Gastrocnemius medialis (tissue), 4 donors: ENCODE measurements at regions of chr3 and their contacts with region 1.

Region 1: DNA sequence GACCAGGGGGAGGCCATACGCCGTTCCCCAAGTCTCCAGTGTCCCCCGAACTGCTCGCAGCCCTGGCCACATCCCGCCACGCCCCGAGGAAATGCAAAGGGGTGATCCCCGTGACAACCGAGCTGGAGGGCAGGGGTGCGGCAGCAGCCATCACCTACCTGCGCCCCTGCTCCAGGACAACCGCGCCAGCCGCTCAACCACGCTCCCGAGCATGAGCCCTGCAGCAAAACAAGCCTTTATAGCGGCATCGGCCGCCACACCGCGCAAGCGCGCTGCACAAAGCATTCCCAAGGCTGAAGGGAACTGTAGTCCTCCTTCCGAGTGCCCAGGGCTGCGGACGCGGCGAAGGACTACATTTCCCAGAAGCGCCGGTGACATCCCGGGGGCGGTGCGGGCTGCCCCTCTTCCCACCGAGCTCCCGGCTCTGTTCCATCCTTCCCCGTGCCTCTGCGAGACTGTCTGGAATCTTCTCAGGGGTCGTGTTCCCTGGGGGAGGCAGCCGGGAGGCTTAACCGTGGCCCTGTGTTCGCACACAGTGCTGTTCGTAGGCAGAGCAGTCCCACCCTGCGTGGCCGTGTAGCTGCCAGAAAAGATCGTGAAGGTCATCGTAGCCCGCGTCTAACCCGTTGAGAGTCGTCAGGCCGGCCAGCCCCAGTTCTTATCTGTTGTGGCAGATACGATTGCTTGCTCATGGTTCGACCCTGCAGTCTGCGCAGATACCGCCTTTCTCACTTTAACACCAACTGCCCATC is at the start of gene ABCC5:
- DNase-seq: peak; percentile 92 to 93
- ATAC-seq: peak; percentile 87 to 88
- H3K4me3 ChIP-seq: peak within 1 kb of the TSS; percentile 98 to 100 (median 100)
- H3K27ac ChIP-seq: peak within 1 kb of the TSS; percentile 87 to 98 (median 92)
- H3K4me1 ChIP-seq: peaks cover 19 to 37% of the 10 kb centered on the region in 2 donors
- H3K27me3 ChIP-seq: no peaks in the 10 kb centered on the region
- CTCF ChIP-seq: peak in 3 of 5 experiments; percentile 42 to 56 (median 52)
- POLR2A ChIP-seq: peak; percentile 65 to 88
- total RNA-seq, gene ABCC5: 20.4 to 52.2 (median 39.5) TPM

Region 2: GRCh38 chr3:183895296-183895695 is 122.6 kb before region 1 on chr3:
- in situ Hi-C with region 1: loop called in 3 of 4 experiments (anchors 5 to 10 kb)
- intact Hi-C with region 1: loop called (anchors 1 kb)
- DNase-seq: no peak
- ATAC-seq: peak; percentile 81 to 83
- H3K4me3 ChIP-seq: no peak overlapping the region
- H3K27ac ChIP-seq: no peak overlapping the region
- H3K4me1 ChIP-seq: peaks cover 0 to 4% of the 10 kb centered on the region in 2 donors
- H3K27me3 ChIP-seq: no peaks in the 10 kb centered on the region
- CTCF ChIP-seq: peak; percentile 69 to 79 (median 76)
- POLR2A ChIP-seq: no peak

Region 3: GRCh38 chr3:183975981-183976662 is 41.7 kb before region 1 on chr3:
- in situ Hi-C with region 1: no loop called
- intact Hi-C with region 1: loop called (anchors 1 kb)
- DNase-seq: no peak
- ATAC-seq: no peak
- H3K4me3 ChIP-seq: no peak overlapping the region
- H3K27ac ChIP-seq: peak overlapping the region; percentile 88 to 94 (median 90)
- H3K4me1 ChIP-seq: peaks cover 44 to 52% of the 10 kb centered on the region in 2 donors
- H3K27me3 ChIP-seq: no peaks in the 10 kb centered on the region
- CTCF ChIP-seq: no peak
- POLR2A ChIP-seq: no peak

Region 4: DNA sequence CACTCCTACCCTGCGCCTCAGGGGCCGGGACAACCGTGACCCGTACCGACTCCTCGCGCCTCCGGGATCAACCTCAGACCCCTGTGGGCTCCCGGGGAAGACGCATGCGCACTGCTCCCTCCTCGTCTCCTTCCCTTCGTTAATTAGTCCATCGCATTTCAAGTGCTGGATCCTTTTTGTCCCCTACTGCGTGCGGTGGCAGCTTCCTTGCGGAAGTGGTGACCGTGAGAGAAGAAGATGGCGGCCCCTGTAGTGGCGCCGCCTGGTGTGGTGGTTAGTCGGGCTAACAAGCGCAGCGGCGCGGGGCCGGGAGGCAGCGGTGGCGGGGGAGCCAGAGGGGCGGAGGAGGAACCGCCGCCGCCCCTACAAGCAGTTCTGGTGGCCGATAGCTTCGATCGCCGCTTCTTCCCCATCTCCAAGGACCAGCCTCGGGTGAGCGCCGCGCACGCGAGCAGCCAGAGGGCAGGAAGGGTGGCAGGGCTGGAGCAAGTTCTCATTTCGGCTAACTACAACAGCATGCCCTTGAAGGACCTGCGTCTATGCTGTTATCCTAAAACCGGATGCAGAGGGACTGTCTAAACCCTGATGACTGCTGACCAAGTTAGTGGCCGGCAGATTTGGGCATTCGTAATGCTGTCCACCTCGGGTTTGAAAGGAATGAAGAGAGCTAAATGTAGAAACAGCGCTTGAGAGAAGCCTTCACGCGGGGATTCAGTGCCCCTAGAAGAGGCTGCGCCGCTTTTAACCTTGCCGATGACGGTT is 117.5 kb after region 1 on chr3 and contains the start of gene EIF2B5:
- in situ Hi-C with region 1: no loop called
- intact Hi-C with region 1: loop called (anchors 2 kb)
- DNase-seq: peak; percentile 90 to 91
- ATAC-seq: peak; percentile 89 to 94
- H3K4me3 ChIP-seq: peak within 1 kb of the TSS; percentile 65 to 97 (median 80)
- H3K27ac ChIP-seq: peak within 1 kb of the TSS; percentile 88 to 97 (median 93)
- H3K4me1 ChIP-seq: peaks cover 15 to 25% of the 10 kb centered on the region in 2 donors
- H3K27me3 ChIP-seq: no peaks in the 10 kb centered on the region
- CTCF ChIP-seq: peak in 4 of 5 experiments; percentile 32 to 55 (median 47)
- POLR2A ChIP-seq: peak; percentile 70 to 72
- total RNA-seq, gene EIF2B5: 42.6 to 56.8 (median 53.4) TPM

Region 5: DNA sequence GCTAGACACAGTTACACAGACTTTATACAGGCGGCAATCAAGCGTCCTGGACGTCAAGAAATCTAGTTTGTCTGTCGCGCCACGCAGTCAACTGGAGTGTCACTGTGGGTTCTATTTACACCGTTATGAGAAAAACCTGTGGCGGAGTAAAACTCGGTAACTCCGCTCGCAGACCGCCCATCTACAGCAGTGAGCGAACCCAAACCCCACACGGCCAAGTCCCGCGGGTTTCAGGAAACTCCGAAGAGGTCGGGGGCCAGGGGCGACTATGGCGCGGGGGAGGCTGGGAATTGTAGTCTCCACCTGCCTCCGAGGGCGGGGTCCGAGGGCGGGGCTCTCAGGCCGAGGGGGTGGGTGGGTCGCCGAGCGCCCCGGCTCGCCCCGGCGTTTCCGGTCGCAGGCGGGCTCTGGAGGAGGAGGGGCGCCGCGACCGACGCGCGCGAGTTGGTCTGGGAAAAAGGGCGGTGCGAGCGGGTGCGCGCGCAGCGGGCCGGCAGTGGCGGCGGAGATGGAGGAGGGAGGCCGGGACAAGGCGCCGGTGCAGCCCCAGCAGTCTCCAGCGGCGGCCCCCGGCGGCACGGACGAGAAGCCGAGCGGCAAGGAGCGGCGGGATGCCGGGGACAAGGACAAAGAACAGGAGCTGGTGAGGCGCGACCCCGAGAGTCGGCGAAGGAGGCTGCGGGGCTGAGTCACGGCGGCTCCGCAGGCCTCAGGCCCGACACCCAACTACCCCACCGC is 281.1 kb after region 1 on chr3 and contains the start of gene PSMD2:
- in situ Hi-C with region 1: no loop called
- intact Hi-C with region 1: loop called (anchors 10 kb)
- DNase-seq: peak; percentile 97
- ATAC-seq: peak; percentile 93 to 96
- H3K4me3 ChIP-seq: peak within 1 kb of the TSS; percentile 70 to 93 (median 76)
- H3K27ac ChIP-seq: peak within 1 kb of the TSS; percentile 81 to 93 (median 86)
- H3K4me1 ChIP-seq: peaks cover 14 to 18% of the 10 kb centered on the region in 2 donors
- H3K27me3 ChIP-seq: no peaks in the 10 kb centered on the region
- CTCF ChIP-seq: peak in 1 of 5 experiments; percentile 18
- POLR2A ChIP-seq: peak; percentile 94 to 98
- total RNA-seq, gene PSMD2: 560 to 831 (median 720) TPM

Region 6: GRCh38 chr3:184811999-184812661 is 794.3 kb after region 1 on chr3 and contains the start of gene VPS8:
- in situ Hi-C with region 1: no loop called
- intact Hi-C with region 1: loop called (anchors 10 kb)
- DNase-seq: peak; percentile 92 to 96
- ATAC-seq: peak; percentile 81 to 83
- H3K4me3 ChIP-seq: peak within 1 kb of the TSS; percentile 70 to 87 (median 82)
- H3K27ac ChIP-seq: peak within 1 kb of the TSS; percentile 89 to 94 (median 90)
- H3K4me1 ChIP-seq: peaks cover 45 to 51% of the 10 kb centered on the region in 2 donors
- H3K27me3 ChIP-seq: no peaks in the 10 kb centered on the region
- CTCF ChIP-seq: peak in 4 of 5 experiments; percentile 77 to 89 (median 81)
- POLR2A ChIP-seq: peak; percentile 98
- total RNA-seq, gene VPS8: 37.2 to 64.1 (median 51.2) TPM